Psoas muscle (tissue), 8 donors: ENCODE measurements at regions of chr14 and their contacts with region 1.

Region 1: GRCh38 chr14:74257078-74257989 is 18.1 kb downstream of the VSX2 start:
- DNase-seq: peak; percentile 41 to 72
- ATAC-seq: peak; percentile 84 to 95 (median 92)
- H3K4me3 ChIP-seq: peak overlapping the region; percentile 84
- H3K27ac ChIP-seq: no peak overlapping the region
- H3K4me1 ChIP-seq: peaks cover 10% of the 10 kb centered on the region
- H3K27me3 ChIP-seq: peaks cover 0 to 14% (median 8%) of the 10 kb centered on the region in 3 donors
- CTCF ChIP-seq: peak; percentile 91

Region 2: DNA sequence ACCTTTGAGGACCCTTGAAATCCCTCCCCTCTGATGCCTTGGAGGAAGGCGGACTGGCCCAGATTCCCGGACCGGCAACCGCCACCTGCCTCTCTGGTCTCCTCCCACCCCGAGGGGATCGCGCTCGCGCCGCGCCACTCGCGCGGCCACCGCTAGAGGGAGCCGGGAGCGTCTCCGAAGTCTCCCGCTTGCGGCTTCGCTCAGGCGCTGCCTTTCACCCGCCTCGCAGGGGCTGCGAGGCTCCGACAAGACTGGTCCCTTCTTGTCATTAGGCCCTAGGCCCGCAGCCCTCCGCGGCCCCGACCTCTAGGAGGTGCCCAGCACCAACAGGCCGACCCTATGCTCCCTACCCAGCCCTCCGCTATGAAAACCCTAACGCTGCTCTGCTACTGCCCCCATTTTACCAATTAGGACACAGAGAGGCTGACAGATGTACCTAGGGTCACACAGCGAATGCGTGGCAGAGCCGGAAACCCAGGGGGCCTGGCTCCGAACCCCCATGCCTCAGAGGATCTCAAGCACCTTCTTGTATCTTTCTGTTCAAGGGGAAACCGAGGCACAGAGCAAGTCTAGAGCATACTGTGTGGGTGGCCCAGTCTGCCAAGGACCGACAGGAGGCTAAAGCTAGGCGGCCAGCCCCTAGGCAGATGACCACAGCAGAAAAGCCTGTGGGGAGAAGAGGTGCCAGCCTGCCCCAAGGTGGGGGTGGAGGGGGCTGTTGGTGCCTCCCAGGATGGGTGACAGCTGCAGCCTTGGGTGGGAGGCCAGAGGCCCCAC is 39.5 kb before region 1 on chr14:
- intact Hi-C with region 1: loop called in 1 of 2 experiments (anchors 2 kb)
- DNase-seq: peak; percentile 72 to 85
- ATAC-seq: peak; percentile 88 to 97 (median 90)
- H3K4me3 ChIP-seq: peak overlapping the region; percentile 41
- H3K27ac ChIP-seq: no peak overlapping the region
- H3K4me1 ChIP-seq: no peaks in the 10 kb centered on the region
- H3K27me3 ChIP-seq: peaks cover 0 to 20% (median 0%) of the 10 kb centered on the region in 3 donors
- CTCF ChIP-seq: peak; percentile 88